Posterior vena cava (tissue), 2 donors: ENCODE measurements at regions of chr9 and their contacts with region 1.

Region 1: GRCh38 chr9:2718001-2718697 is 839 bp downstream of the KCNV2 start:
- DNase-seq: no peak

Region 2: GRCh38 chr9:2613730-2614271 is 104.3 kb before region 1 on chr9:
- intact Hi-C with region 1: loop called in 1 of 2 experiments (anchors 5 kb)
- DNase-seq: no peak

Region 3: DNA sequence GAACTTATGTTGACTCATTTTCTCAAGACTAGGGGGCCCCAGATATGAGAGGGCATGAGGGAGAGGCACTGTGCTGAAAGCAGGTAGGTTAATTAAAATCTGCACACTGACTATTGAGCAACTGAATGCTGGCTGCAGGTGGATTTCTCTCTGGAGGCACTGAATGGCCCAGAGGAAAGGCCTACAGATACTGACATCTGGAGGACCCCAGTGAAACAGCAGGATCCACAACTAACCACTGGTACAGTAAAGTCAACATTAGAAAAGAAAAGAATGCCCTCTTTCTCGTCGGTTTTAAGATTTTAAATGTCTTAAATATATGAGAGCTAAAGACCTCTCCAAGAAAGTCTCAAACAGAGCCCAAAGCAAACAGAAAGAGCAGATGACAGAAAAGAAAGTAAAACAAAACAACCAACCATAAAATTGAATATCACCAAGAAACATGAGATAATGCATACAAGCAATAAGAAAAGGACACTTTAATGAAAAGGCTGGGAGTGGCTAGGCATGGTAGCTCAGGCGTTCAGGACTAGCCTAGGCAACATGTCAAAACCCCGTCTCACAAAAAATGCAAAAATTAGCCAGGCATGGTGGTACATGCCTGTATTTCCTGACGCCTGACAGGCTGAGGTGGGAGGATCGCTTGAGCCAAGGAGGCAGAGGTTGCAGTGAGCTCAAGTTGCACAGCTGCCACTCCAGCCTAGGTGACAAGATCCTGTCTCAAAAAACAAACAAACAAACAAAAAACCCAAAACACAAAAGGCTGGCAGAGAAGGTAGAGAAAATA is 82.4 kb after region 1 on chr9:
- intact Hi-C with region 1: no loop called
- DNase-seq: no peak